ENCODE measurements at regions of chr6 and their contacts with region 1.

Region 1: DNA sequence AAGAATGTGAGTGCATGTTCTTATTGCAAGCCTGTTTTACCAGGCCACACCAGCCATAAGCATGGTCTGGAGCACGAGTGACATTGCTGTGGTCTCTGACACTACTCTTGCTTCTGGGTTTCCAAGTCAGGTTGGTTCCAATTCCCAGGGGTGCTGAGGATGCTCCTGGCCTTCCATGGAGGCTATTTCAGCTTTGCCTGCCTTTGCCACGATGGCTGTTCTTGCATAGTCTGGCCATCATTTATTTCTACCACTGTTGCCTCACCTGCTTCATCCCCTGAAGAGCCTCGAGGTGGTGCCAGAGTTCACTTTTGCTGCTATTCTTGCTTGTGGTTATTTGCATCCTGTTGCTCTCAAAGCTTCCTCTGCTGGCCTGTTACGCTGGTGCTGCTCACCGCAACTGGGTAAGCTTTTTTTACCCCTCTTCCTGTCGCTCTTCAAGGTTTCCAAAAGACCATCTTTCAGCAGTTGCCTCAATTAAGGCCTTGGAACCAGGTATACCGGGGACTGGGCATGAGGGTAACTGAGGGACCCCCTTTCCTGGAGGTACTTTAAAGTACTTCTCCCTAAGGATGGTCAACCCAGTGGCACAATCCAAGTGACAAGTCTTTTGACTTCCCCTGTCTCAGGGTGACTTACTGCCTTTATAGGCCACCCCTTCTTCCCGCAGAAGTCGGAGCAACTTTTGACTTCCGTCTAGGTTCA is 64.5 kb downstream of the AKAP7 start:
- DNase-seq: peak; percentile 89
- ATAC-seq: peak; percentile 93
- H3K4me3 Mint-ChIP-seq: peak overlapping the region; percentile 75
- H3K27ac Mint-ChIP-seq: peak overlapping the region; percentile 96
- H3K4me1 Mint-ChIP-seq: peaks cover 65% of the 10 kb centered on the region
- H3K27me3 Mint-ChIP-seq: no peaks in the 10 kb centered on the region

Region 2: DNA sequence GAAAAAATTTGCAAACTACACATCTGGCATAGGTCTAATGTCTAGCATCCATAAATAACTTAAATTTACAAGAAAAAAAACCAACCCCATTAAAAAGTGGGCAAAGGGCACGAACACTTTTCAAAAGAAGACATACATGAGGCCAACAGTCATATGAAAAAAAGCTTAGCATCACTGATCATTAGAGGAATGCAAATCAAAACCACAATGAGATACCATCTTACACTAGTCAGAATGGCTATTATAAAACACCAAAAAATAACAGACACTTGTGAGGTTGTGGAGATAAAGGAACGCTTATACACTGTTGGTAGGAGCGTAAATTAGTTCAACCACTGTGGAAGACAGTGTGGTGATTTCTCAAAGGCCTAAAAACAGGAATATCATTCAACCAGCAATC is 102.9 kb before region 1 on chr6:
- CTCF ChIA-PET with region 1: no interaction called
- POLR2A ChIA-PET with region 1: no interaction called
- DNase-seq: no peak
- ATAC-seq: no peak
- H3K4me3 Mint-ChIP-seq: no peak overlapping the region
- H3K27ac Mint-ChIP-seq: no peak overlapping the region
- H3K4me1 Mint-ChIP-seq: no peaks in the 10 kb centered on the region
- H3K27me3 Mint-ChIP-seq: no peaks in the 10 kb centered on the region

Region 3: GRCh38 chr6:131159608-131160007 is 40.1 kb before region 1 on chr6:
- CTCF ChIA-PET with region 1: no interaction called
- POLR2A ChIA-PET with region 1: no interaction called
- DNase-seq: no peak
- ATAC-seq: no peak
- H3K4me3 Mint-ChIP-seq: no peak overlapping the region
- H3K27ac Mint-ChIP-seq: no peak overlapping the region
- H3K4me1 Mint-ChIP-seq: no peaks in the 10 kb centered on the region
- H3K27me3 Mint-ChIP-seq: no peaks in the 10 kb centered on the region

Region 4: GRCh38 chr6:131182991-131183425 is 16.7 kb before region 1 on chr6:
- CTCF ChIA-PET with region 1: interaction called, 49 read pairs
- POLR2A ChIA-PET with region 1: interaction called, 3 read pairs
- DNase-seq: peak; percentile 55
- ATAC-seq: peak; percentile 88
- H3K4me3 Mint-ChIP-seq: no peak overlapping the region
- H3K27ac Mint-ChIP-seq: peak overlapping the region; percentile 96
- H3K4me1 Mint-ChIP-seq: peaks cover 11% of the 10 kb centered on the region
- H3K27me3 Mint-ChIP-seq: no peaks in the 10 kb centered on the region

Region 5: GRCh38 chr6:131213501-131213990 is 13.8 kb after region 1 on chr6:
- CTCF ChIA-PET with region 1: interaction called, 12 read pairs
- POLR2A ChIA-PET with region 1: no interaction called
- DNase-seq: no peak
- ATAC-seq: peak; percentile 67
- H3K4me3 Mint-ChIP-seq: no peak overlapping the region
- H3K27ac Mint-ChIP-seq: peak overlapping the region; percentile 25
- H3K4me1 Mint-ChIP-seq: peaks cover 30% of the 10 kb centered on the region
- H3K27me3 Mint-ChIP-seq: no peaks in the 10 kb centered on the region

Region 6: DNA sequence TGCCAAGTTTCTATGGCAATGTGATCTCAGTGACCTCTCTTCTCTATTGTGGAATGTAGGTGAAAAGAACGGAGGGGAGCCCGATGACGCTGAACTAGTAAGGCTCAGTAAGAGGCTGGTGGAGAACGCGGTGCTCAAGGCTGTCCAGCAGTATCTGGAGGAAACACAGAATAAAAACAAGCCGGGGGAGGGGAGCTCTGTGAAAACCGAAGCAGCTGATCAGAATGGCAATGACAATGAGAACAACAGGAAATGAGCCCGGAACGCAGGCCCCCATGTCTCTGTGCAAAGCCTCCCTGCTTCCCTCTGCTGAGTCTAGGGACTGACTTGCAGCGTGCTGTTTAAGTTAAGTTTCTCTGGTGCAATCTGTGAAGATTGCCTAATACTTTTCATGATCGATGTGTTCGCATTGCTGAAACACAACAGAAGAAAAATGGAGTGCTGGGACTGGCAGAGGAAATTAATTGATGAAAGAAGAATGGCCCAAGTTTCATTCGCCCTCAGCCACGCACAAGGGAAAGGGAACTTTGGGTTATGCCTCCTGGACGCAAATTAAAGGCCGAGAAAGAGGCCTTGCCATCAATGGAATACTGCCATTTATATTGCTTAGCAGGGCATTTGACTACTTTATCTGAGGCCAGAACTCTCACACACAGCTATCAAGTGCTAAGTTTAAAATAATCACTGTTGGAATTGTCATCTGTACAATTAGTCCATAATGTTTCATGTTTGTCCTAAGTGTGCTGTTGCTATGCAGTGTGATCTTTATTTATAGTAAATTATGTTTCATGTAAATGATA is 82.0 kb after region 1 on chr6:
- CTCF ChIA-PET with region 1: interaction called, 28 read pairs
- POLR2A ChIA-PET with region 1: interaction called, 13 read pairs
- DNase-seq: peak; percentile 84
- ATAC-seq: peak; percentile 93
- H3K4me3 Mint-ChIP-seq: peak overlapping the region; percentile 71
- H3K27ac Mint-ChIP-seq: peak overlapping the region; percentile 97
- H3K4me1 Mint-ChIP-seq: peaks cover 20% of the 10 kb centered on the region
- H3K27me3 Mint-ChIP-seq: no peaks in the 10 kb centered on the region

Region 7: DNA sequence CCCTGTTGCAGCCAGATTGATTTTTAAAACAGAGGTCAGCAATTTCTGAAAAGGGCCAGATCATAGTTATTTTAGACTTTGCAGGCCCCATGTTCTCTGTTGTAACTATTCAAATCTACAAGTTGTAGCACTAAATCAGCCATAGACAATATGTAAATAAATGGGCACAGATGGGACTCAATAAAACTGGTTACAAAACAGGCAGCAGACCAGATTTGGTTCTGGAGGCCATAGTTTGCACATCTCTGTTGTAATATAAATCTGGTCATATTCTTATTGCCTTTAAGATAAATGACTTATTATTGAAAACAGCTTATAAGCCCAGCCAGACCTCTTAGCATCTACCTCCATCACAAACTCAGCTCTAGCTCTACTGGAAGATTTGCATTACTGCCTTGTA is 259.3 kb after region 1 on chr6:
- CTCF ChIA-PET with region 1: interaction called, 11 read pairs
- POLR2A ChIA-PET with region 1: interaction called, 3 read pairs
- DNase-seq: no peak
- ATAC-seq: no peak
- H3K4me3 Mint-ChIP-seq: no peak overlapping the region
- H3K27ac Mint-ChIP-seq: no peak overlapping the region
- H3K4me1 Mint-ChIP-seq: peaks cover 3% of the 10 kb centered on the region
- H3K27me3 Mint-ChIP-seq: no peaks in the 10 kb centered on the region

Region 8: GRCh38 chr6:131519670-131520436 is 320.1 kb after region 1 on chr6:
- CTCF ChIA-PET with region 1: interaction called, 27 read pairs
- POLR2A ChIA-PET with region 1: no interaction called
- DNase-seq: peak; percentile 68
- ATAC-seq: peak; percentile 95
- H3K4me3 Mint-ChIP-seq: no peak overlapping the region
- H3K27ac Mint-ChIP-seq: no peak overlapping the region
- H3K4me1 Mint-ChIP-seq: peaks cover 18% of the 10 kb centered on the region
- H3K27me3 Mint-ChIP-seq: peaks cover 2% of the 10 kb centered on the region

Region 9: GRCh38 chr6:131532580-131533039 is 332.9 kb after region 1 on chr6:
- CTCF ChIA-PET with region 1: interaction called, 118 read pairs
- POLR2A ChIA-PET with region 1: interaction called, 13 read pairs
- DNase-seq: no peak
- ATAC-seq: peak; percentile 46
- H3K4me3 Mint-ChIP-seq: no peak overlapping the region
- H3K27ac Mint-ChIP-seq: peak overlapping the region; percentile 49
- H3K4me1 Mint-ChIP-seq: peaks cover 59% of the 10 kb centered on the region
- H3K27me3 Mint-ChIP-seq: peaks cover 4% of the 10 kb centered on the region